Natural killer cell (primary cell): ENCODE measurements at regions of chr9 and their contacts with region 1.

Region 1: DNA sequence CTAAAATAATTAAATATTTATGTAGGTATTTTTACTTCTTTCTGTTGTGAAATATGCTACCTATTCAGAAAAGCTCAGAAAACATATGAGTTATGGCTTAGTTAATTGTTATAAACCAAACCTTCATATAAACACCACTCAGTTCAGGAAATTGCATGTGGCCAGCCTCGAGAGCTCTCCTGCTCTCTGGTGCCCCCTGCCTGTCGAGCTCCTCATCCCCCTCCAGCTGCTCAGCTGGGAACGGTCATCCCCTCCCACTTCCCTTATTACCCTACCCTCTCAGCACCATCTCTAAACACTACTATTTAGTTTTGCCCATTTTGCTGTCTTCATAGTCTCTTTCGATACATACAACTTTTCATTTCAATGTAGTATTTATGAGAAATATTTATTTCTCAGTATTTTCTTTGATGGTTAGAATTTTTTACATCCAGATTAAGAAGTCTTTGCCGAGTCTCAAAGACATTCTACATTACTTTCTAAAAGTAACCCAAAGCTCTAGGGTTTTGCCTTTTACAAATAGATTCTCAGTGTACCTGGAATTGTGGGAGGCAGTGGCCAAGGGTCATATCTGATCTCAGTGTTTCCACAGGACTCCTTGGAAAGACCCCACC is 51.2 kb upstream of the SEMA4D start:
- DNase-seq: peak; percentile 81 to 93
- ATAC-seq: peak; percentile 96 to 100 (median 100)
- H3K4me3 ChIP-seq: no peak overlapping the region
- H3K4me3 Mint-ChIP-seq: no peak overlapping the region
- H3K27ac ChIP-seq: no peak overlapping the region
- H3K27ac Mint-ChIP-seq: peak overlapping the region; percentile 8 to 70
- H3K4me1 ChIP-seq: peaks cover 11% of the 10 kb centered on the region
- H3K4me1 Mint-ChIP-seq: peaks cover 0 to 13% of the 10 kb centered on the region in 2 donors
- H3K27me3 ChIP-seq: no peaks in the 10 kb centered on the region
- H3K27me3 Mint-ChIP-seq: no peaks in the 10 kb centered on the region
- CTCF ChIP-seq: peak; percentile 97

Region 2: DNA sequence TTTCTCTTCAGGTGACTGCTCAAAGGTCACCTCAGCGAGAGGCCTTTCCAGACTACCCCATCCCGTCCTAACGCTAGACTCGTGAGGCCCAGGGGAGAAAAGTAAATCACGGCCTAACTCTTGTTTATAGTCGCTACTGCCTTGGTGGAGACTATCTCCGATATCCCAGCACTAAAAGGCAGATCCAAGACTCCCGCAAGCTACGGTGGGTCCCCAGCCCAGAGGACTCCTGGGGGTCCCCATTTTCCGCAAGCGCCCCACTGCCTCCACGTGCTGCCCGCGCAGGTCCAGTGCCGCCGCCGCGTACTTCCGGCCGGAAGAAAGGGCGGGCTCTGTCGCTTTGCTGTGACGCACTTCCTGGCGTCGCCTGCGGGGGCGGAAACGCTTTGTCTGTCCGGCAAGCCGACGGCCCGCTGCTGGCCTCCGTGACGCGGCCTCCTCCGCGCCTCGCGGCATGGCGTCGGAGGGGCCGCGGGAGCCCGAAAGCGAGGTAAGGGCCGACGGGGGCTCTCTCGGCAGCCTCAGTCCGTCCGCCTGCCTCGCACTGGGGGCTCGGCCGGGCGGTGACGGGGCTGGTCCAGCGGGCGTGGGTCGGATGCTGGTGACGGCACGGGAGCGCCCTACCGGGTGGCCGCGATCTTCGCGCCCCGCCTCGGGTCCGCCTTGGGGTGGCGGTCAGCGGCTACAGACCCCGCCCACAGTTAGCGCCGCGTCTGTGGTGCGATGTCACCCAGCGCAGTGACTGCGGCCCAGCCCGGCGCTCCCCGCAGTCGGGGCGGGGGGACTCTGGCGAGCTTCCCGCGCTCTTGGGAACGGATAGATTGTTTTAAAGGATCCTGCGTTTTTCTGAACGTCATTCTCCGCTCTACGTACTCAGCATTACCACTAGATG is 230.8 kb before region 1 on chr9 and contains the start of gene SECISBP2:
- intact Hi-C with region 1: loop called (anchors 2 kb)
- DNase-seq: peak; percentile 96
- ATAC-seq: peak; percentile 87 to 98 (median 92)
- H3K4me3 ChIP-seq: peak within 1 kb of the TSS; percentile 54
- H3K4me3 Mint-ChIP-seq: peak within 1 kb of the TSS; percentile 96
- H3K27ac ChIP-seq: peak within 1 kb of the TSS; percentile 84
- H3K27ac Mint-ChIP-seq: peak within 1 kb of the TSS; percentile 94 to 98
- H3K4me1 ChIP-seq: peaks cover 16% of the 10 kb centered on the region
- H3K4me1 Mint-ChIP-seq: peaks cover 34 to 38% of the 10 kb centered on the region in 2 donors
- H3K27me3 ChIP-seq: no peaks in the 10 kb centered on the region
- H3K27me3 Mint-ChIP-seq: no peaks in the 10 kb centered on the region
- CTCF ChIP-seq: peak; percentile 66
- total RNA-seq, gene SECISBP2: 79.5 to 95.8 (median 88.7) TPM

Region 3: DNA sequence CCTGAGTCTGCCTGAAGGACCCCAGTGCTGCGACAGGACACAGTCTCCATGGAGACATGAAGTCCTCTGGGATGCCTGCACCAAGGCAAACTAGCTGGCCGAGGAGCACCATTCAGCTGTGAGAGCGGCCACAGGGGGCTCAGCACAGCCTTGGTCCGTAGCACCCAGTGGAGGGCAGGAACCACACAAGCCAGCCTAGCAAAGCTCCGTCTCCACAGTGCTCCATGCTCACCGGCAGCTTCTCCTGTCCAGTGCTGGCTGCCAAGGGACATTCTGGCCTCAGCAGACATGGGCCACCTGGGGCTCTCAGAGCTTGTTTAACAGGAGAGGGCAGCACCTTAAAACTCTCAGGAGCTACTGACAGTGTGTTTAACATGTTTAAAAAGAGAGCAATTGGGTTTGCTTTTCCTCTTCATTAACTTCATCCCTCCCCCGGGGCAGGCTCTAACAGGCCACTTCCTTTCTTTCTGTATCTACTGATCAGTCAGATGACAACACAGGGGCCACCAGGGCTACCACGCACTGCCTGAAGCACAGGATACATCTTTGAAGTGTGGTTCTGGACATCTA is 173.9 kb before region 1 on chr9:
- intact Hi-C with region 1: loop called (anchors 1 kb)
- DNase-seq: peak in 1 of 2 donors; percentile 37
- ATAC-seq: peak; percentile 45 to 66 (median 52)
- H3K4me3 ChIP-seq: no peak overlapping the region
- H3K4me3 Mint-ChIP-seq: peak overlapping the region; percentile 47
- H3K27ac ChIP-seq: peak overlapping the region; percentile 62
- H3K27ac Mint-ChIP-seq: peak overlapping the region in 1 of 2 donors; percentile 82
- H3K4me1 ChIP-seq: peaks cover 45% of the 10 kb centered on the region
- H3K4me1 Mint-ChIP-seq: peaks cover 47 to 53% of the 10 kb centered on the region in 2 donors
- H3K27me3 ChIP-seq: no peaks in the 10 kb centered on the region
- H3K27me3 Mint-ChIP-seq: no peaks in the 10 kb centered on the region
- CTCF ChIP-seq: no peak

Region 4: GRCh38 chr9:90568667-90569066 is 1019.5 kb after region 1 on chr9:
- intact Hi-C with region 1: no loop called
- DNase-seq: no peak
- ATAC-seq: no peak
- H3K4me3 ChIP-seq: no peak overlapping the region
- H3K4me3 Mint-ChIP-seq: no peak overlapping the region
- H3K27ac ChIP-seq: no peak overlapping the region
- H3K27ac Mint-ChIP-seq: no peak overlapping the region
- H3K4me1 ChIP-seq: no peaks in the 10 kb centered on the region
- H3K4me1 Mint-ChIP-seq: no peaks in the 10 kb centered on the region
- H3K27me3 ChIP-seq: no peaks in the 10 kb centered on the region
- H3K27me3 Mint-ChIP-seq: peaks cover 9 to 32% of the 10 kb centered on the region in 2 donors
- CTCF ChIP-seq: no peak